CD4-positive, alpha-beta T cell (primary cell): ENCODE measurements at regions of chr17 and their contacts with region 1.

Region 1: GRCh38 chr17:42997984-42998938 is at the start of gene RPL27:
- DNase-seq: peak; percentile 95 to 100 (median 98)
- ATAC-seq: peak; percentile 95
- H3K4me3 ChIP-seq: peak within 1 kb of the TSS; percentile 91
- H3K4me3 Mint-ChIP-seq: peak within 1 kb of the TSS; percentile 96
- H3K27ac ChIP-seq: peak within 1 kb of the TSS; percentile 73 to 98
- H3K27ac Mint-ChIP-seq: peak within 1 kb of the TSS; percentile 95
- H3K4me1 ChIP-seq: peaks cover 28% of the 10 kb centered on the region
- H3K4me1 Mint-ChIP-seq: peaks cover 25% of the 10 kb centered on the region
- H3K27me3 ChIP-seq: no peaks in the 10 kb centered on the region
- H3K27me3 Mint-ChIP-seq: no peaks in the 10 kb centered on the region
- CTCF ChIP-seq: peak; percentile 85
- total RNA-seq, gene RPL27: 1,923 to 1,951 TPM

Region 2: GRCh38 chr17:42832974-42833766 is 165.1 kb before region 1 on chr17 and contains the start of gene PSME3:
- CTCF ChIA-PET with region 1: interaction called, 7 read pairs
- POLR2A ChIA-PET with region 1: interaction called, 13 read pairs
- intact Hi-C with region 1: loop called (anchors 1 to 5 kb)
- DNase-seq: peak; percentile 76 to 95 (median 86)
- ATAC-seq: peak; percentile 87
- H3K4me3 ChIP-seq: peak within 1 kb of the TSS; percentile 93
- H3K4me3 Mint-ChIP-seq: peak within 1 kb of the TSS; percentile 95
- H3K27ac ChIP-seq: peak within 1 kb of the TSS; percentile 86 to 88
- H3K27ac Mint-ChIP-seq: peak within 1 kb of the TSS; percentile 98
- H3K4me1 ChIP-seq: peaks cover 24% of the 10 kb centered on the region
- H3K4me1 Mint-ChIP-seq: peaks cover 27% of the 10 kb centered on the region
- H3K27me3 ChIP-seq: no peaks in the 10 kb centered on the region
- H3K27me3 Mint-ChIP-seq: no peaks in the 10 kb centered on the region
- CTCF ChIP-seq: no peak
- total RNA-seq, gene PSME3: 62.1 to 62.5 TPM

Region 3: GRCh38 chr17:43018008-43018853 is 20.0 kb after region 1 on chr17:
- CTCF ChIA-PET with region 1: interaction called, 4 read pairs
- POLR2A ChIA-PET with region 1: interaction called, 24 read pairs
- intact Hi-C with region 1: loop called in 1 of 2 experiments (anchors 1 kb)
- DNase-seq: peak in 7 of 14 experiments; percentile 21 to 83 (median 49)
- ATAC-seq: peak; percentile 58
- H3K4me3 ChIP-seq: no peak overlapping the region
- H3K4me3 Mint-ChIP-seq: peak overlapping the region; percentile 40
- H3K27ac ChIP-seq: peak overlapping the region in 1 of 2 donors; percentile 22
- H3K27ac Mint-ChIP-seq: peak overlapping the region; percentile 67
- H3K4me1 ChIP-seq: peaks cover 35% of the 10 kb centered on the region
- H3K4me1 Mint-ChIP-seq: peaks cover 41% of the 10 kb centered on the region
- H3K27me3 ChIP-seq: no peaks in the 10 kb centered on the region
- H3K27me3 Mint-ChIP-seq: no peaks in the 10 kb centered on the region
- CTCF ChIP-seq: no peak

Region 4: DNA sequence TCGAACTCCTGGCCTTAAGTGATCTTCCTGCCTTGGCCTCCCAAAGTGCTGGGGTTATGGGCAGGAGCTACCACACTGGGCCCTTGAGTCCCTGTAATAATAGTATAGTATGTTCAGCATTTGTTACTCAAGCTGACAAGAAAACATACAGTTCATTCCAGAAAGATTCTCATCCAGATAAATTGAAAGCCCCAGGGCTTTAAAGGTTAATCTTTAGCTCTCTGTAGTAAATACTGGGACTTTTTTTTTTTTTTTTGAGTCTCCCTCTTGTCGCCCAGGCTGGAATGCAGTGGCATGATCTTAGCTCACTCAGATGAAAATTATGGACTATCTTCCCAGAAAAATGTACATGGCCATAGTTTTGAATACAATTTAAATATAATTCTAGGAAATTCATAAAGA is 115.9 kb after region 1 on chr17:
- CTCF ChIA-PET with region 1: no interaction called
- POLR2A ChIA-PET with region 1: no interaction called
- intact Hi-C with region 1: no loop called
- DNase-seq: no peak
- ATAC-seq: no peak
- H3K4me3 ChIP-seq: no peak overlapping the region
- H3K4me3 Mint-ChIP-seq: no peak overlapping the region
- H3K27ac ChIP-seq: no peak overlapping the region
- H3K27ac Mint-ChIP-seq: no peak overlapping the region
- H3K4me1 ChIP-seq: no peaks in the 10 kb centered on the region
- H3K4me1 Mint-ChIP-seq: no peaks in the 10 kb centered on the region
- H3K27me3 ChIP-seq: no peaks in the 10 kb centered on the region
- H3K27me3 Mint-ChIP-seq: no peaks in the 10 kb centered on the region
- CTCF ChIP-seq: no peak

Region 5: GRCh38 chr17:43170766-43171585 is 172.7 kb after region 1 on chr17 and contains the start of gene NBR1:
- CTCF ChIA-PET with region 1: interaction called, 6 read pairs
- POLR2A ChIA-PET with region 1: interaction called, 21 read pairs
- intact Hi-C with region 1: loop called in 1 of 2 experiments (anchors 2 kb)
- DNase-seq: peak; percentile 90 to 99 (median 92)
- ATAC-seq: peak; percentile 76
- H3K4me3 ChIP-seq: peak within 1 kb of the TSS; percentile 71
- H3K4me3 Mint-ChIP-seq: no peak within 1 kb of the TSS
- H3K27ac ChIP-seq: peak within 1 kb of the TSS; percentile 98
- H3K27ac Mint-ChIP-seq: no peak within 1 kb of the TSS
- H3K4me1 ChIP-seq: peaks cover 47% of the 10 kb centered on the region
- H3K4me1 Mint-ChIP-seq: peaks cover 27% of the 10 kb centered on the region
- H3K27me3 ChIP-seq: no peaks in the 10 kb centered on the region
- H3K27me3 Mint-ChIP-seq: no peaks in the 10 kb centered on the region
- CTCF ChIP-seq: no peak
- total RNA-seq, gene NBR1: 23.7 TPM

Region 6: DNA sequence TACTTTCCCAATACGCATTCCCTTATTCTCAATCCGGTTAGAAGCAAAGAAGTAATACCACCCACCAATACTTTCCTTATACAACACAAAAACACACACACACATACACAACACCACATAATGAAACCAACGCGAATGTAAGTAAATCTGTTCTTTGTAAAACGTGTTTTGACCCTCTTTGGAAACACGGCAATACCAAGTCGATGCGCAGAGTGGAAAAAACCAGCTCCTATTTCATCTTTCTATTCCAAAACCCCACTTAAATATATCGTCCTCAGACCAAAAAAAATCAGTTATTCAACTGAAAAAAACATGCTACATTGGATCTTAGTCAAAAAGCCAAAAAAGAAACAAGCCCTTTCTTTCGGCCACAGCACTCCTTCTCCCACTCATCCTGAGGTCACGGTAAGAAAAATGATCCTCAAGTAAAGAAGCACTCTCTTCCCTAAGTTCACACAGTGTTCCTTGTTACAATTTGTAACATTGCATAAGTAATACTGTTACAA is 369.5 kb after region 1 on chr17:
- CTCF ChIA-PET with region 1: interaction called, 3 read pairs
- POLR2A ChIA-PET with region 1: interaction called, 41 read pairs
- intact Hi-C with region 1: no loop called
- DNase-seq: peak in 2 of 14 experiments; percentile 70 to 88
- ATAC-seq: peak; percentile 47
- H3K4me3 ChIP-seq: peak overlapping the region; percentile 83
- H3K4me3 Mint-ChIP-seq: peak overlapping the region; percentile 95
- H3K27ac ChIP-seq: peak overlapping the region; percentile 86 to 97
- H3K27ac Mint-ChIP-seq: peak overlapping the region; percentile 98
- H3K4me1 ChIP-seq: peaks cover 38% of the 10 kb centered on the region
- H3K4me1 Mint-ChIP-seq: peaks cover 48% of the 10 kb centered on the region
- H3K27me3 ChIP-seq: no peaks in the 10 kb centered on the region
- H3K27me3 Mint-ChIP-seq: no peaks in the 10 kb centered on the region
- CTCF ChIP-seq: no peak

Region 7: DNA sequence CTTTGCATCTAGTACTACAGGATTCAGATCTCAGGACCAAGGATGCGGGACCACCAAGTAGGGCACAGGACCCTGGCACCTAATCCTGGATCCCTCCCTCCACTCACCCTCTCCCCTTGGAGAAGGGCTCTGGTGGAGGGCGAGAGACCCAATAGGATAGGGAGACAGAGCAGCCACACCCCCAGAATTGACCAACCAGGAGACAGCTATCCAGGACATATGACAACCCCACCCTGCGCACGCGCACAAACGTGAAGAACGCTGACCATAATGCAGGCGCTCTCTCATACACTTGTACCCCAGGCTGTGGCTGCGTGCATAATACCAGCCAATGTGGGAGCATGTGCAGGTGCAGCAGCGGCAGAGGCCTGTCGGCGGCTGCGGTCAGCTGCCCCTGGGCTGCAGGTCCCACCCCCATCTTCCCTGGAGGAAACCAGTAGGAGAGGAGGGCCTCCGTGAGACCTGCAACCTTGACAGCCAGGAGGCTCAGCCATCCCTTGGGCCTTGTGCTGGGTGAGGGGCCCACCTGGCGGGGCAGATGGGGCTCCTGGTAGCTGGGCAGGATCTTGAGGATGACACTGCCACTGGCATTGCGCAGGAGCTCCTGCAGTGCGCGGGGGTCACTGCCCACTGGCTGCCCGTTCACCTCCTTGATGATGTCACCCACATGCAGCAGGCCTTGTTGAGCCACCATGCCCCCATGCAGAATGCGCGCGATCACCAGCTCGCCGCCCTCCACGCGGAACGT is 883.7 kb after region 1 on chr17:
- CTCF ChIA-PET with region 1: no interaction called
- POLR2A ChIA-PET with region 1: no interaction called
- intact Hi-C with region 1: no loop called
- DNase-seq: no peak
- ATAC-seq: no peak
- H3K4me3 ChIP-seq: no peak overlapping the region
- H3K4me3 Mint-ChIP-seq: no peak overlapping the region
- H3K27ac ChIP-seq: no peak overlapping the region
- H3K27ac Mint-ChIP-seq: no peak overlapping the region
- H3K4me1 ChIP-seq: peaks cover 8% of the 10 kb centered on the region
- H3K4me1 Mint-ChIP-seq: no peaks in the 10 kb centered on the region
- H3K27me3 ChIP-seq: no peaks in the 10 kb centered on the region
- H3K27me3 Mint-ChIP-seq: peaks cover 10% of the 10 kb centered on the region
- CTCF ChIP-seq: no peak

Region 8: GRCh38 chr17:44014437-44015172 is 1016.3 kb after region 1 on chr17 and contains the start of gene TMEM101:
- CTCF ChIA-PET with region 1: no interaction called
- POLR2A ChIA-PET with region 1: no interaction called
- intact Hi-C with region 1: loop called in 1 of 2 experiments (anchors 10 kb)
- DNase-seq: peak; percentile 81 to 95 (median 86)
- ATAC-seq: peak; percentile 99
- H3K4me3 ChIP-seq: peak within 1 kb of the TSS; percentile 94
- H3K4me3 Mint-ChIP-seq: peak within 1 kb of the TSS; percentile 100
- H3K27ac ChIP-seq: no peak within 1 kb of the TSS
- H3K27ac Mint-ChIP-seq: peak within 1 kb of the TSS; percentile 87
- H3K4me1 ChIP-seq: peaks cover 19% of the 10 kb centered on the region
- H3K4me1 Mint-ChIP-seq: peaks cover 22% of the 10 kb centered on the region
- H3K27me3 ChIP-seq: no peaks in the 10 kb centered on the region
- H3K27me3 Mint-ChIP-seq: peaks cover 5% of the 10 kb centered on the region
- CTCF ChIP-seq: no peak
- total RNA-seq, gene TMEM101: 8.8 to 9.7 TPM